ENCODE measurements at regions of chr10 and their contacts with region 1.

Region 1: DNA sequence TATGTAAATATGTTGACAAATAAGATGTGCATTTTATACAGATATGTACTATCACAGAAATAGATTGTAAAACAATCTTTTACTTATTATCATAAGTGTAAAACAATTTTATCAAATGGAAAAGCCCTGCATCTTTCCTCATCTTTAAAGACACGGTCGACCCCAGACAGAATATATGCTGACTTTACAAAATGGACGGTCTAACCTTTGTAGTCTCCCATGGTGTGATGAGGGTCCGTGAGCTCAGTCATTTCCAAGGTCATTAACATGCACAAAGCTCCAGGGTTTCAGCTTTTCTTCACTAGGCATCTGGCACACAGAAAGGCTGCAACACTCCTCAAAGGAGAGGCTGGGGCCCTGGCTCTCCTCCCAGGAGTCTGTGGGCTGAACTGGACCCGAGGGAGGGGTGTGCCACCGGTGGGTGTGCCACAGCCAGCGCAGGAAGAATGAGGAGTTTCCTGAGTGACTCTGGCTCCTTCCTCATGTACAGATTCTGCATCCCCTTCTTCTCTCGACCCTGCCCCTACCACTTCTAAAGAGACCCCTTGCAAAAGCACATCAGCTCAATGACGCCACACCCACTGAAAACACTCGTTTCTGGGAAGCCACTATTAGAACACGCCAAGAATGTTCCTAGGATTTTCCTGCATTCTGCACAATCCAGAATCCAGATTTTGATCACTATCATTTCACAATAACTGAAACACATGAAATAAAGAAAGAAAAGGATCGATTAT is 26.2 kb upstream of the ABLIM1 start:
- DNase-seq: peak; percentile 85
- H3K4me3 ChIP-seq: peak overlapping the region; percentile 3 to 68 (median 35)
- H3K27ac ChIP-seq: peak overlapping the region; percentile 92
- H3K4me1 ChIP-seq: peaks cover 45% of the 10 kb centered on the region
- H3K27me3 ChIP-seq: no peaks in the 10 kb centered on the region
- CTCF ChIP-seq: no peak
- POLR2A ChIP-seq: no peak

Region 2: DNA sequence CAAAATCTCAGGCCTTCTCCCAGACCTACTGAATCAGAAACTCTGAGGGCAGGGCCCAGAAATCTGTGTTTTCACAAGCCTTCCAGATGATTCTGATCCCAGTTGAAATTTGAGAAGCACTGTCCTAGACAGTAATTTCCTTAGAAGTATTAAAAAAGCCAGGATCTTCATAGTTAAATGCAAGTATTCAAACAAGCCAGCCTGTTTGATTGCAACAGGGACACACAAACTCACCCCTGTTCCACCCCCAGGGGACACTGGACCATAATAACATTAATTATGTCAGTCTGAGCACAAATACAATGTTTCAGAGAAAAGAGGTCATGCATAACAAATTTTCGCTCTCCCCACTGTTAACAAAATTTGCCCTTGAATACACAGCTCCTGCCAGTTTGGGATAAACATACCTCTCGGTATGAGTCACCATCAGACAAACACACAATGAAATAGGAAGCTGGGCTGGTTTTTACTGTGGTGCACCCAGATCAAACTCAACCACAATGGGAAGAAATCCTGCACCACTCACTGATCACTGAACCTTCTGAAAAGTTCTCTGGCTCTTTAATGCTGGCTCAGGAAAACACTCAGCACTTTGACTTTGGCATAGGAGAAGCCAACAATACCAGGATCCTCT is 60.5 kb before region 1 on chr10:
- CTCF ChIA-PET with region 1: no interaction called
- POLR2A ChIA-PET with region 1: no interaction called
- dilution Hi-C with region 1: no loop called
- intact Hi-C with region 1: loop called (anchors 1 kb)
- DNase-seq: peak; percentile 90
- H3K4me3 ChIP-seq: no peak overlapping the region
- H3K27ac ChIP-seq: peak overlapping the region; percentile 45
- H3K4me1 ChIP-seq: peaks cover 15% of the 10 kb centered on the region
- H3K27me3 ChIP-seq: no peaks in the 10 kb centered on the region
- CTCF ChIP-seq: no peak
- POLR2A ChIP-seq: no peak

Region 3: GRCh38 chr10:114631666-114632417 is 52.4 kb before region 1 on chr10:
- CTCF ChIA-PET with region 1: interaction called, 3 read pairs
- POLR2A ChIA-PET with region 1: interaction called, 3 read pairs
- dilution Hi-C with region 1: no loop called
- intact Hi-C with region 1: loop called (anchors 1 kb)
- DNase-seq: peak; percentile 60
- H3K4me3 ChIP-seq: peak overlapping the region; percentile 56 to 75 (median 71)
- H3K27ac ChIP-seq: no peak overlapping the region
- H3K4me1 ChIP-seq: peaks cover 39% of the 10 kb centered on the region
- H3K27me3 ChIP-seq: no peaks in the 10 kb centered on the region
- CTCF ChIP-seq: no peak
- POLR2A ChIP-seq: no peak

Region 4: DNA sequence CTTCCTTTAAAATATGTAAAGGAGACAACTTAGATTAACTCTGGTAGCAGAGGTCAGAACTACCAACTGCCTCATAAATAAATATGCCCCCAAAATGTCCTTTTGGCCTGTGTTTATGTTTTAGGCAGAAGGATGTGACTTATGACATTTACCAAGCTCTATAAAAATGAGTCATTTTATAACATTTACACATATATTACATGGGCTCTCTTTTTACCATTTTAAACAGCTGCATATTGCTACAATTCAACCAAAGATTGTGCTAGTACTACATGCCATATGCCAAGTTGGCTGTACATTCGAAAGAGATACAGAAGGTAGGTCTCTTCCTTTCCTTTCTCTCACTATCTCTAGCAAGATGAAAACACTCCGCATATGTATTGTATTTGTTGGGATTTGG is 38.5 kb before region 1 on chr10:
- CTCF ChIA-PET with region 1: interaction called, 4 read pairs
- POLR2A ChIA-PET with region 1: no interaction called
- dilution Hi-C with region 1: no loop called
- intact Hi-C with region 1: loop called (anchors 1 kb)
- DNase-seq: peak; percentile 71
- H3K4me3 ChIP-seq: no peak overlapping the region
- H3K27ac ChIP-seq: peak overlapping the region; percentile 21
- H3K4me1 ChIP-seq: peaks cover 55% of the 10 kb centered on the region
- H3K27me3 ChIP-seq: no peaks in the 10 kb centered on the region
- CTCF ChIP-seq: no peak
- POLR2A ChIP-seq: no peak

Region 5: DNA sequence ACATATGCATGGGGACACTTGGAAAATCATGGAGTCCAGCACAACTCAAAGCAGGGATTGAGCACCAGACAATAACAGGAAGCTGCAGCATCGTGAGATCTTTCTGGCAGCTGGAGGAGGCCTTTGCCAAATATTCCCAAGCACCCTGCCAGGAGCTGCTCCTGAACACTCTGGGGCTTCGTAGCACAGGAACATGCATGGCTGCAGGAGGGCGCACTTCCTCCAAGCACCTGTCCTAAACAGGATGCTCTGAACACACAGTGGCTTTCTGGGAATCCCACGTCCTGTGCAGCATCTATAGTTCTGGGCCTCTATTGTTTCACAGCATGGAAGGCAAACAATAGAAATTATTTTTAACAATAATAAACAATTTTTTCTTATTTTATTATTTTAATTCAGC is 30.3 kb before region 1 on chr10:
- CTCF ChIA-PET with region 1: interaction called, 4 read pairs
- POLR2A ChIA-PET with region 1: interaction called, 3 read pairs
- dilution Hi-C with region 1: no loop called
- intact Hi-C with region 1: loop called (anchors 1 kb)
- DNase-seq: peak; percentile 90
- H3K4me3 ChIP-seq: no peak overlapping the region
- H3K27ac ChIP-seq: peak overlapping the region; percentile 82
- H3K4me1 ChIP-seq: peaks cover 64% of the 10 kb centered on the region
- H3K27me3 ChIP-seq: no peaks in the 10 kb centered on the region
- CTCF ChIP-seq: no peak
- POLR2A ChIP-seq: no peak

Region 6: DNA sequence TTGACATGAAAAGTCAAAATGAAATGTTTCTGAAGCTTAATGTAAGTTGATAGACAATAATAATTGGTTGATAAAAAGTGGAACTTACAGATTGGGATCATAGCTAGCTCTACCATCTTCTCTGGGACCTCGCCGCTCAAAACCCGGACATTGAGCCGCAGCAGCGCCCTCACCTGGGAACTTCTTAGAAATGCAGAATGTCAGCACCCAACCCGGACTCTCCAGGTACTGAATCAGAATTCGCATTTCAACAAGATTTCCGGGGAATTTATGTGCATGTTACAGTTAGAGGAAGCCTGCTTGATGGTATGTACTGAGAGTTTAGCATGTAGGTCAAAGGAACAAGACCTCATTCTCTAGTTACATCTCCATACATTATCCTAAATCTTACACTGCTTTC is 10.5 kb after region 1 on chr10:
- CTCF ChIA-PET with region 1: interaction called, 54 read pairs
- POLR2A ChIA-PET with region 1: no interaction called
- dilution Hi-C with region 1: no loop called
- intact Hi-C with region 1: loop called (anchors 1 kb)
- DNase-seq: peak; percentile 62
- H3K4me3 ChIP-seq: no peak overlapping the region
- H3K27ac ChIP-seq: no peak overlapping the region
- H3K4me1 ChIP-seq: peaks cover 15% of the 10 kb centered on the region
- H3K27me3 ChIP-seq: no peaks in the 10 kb centered on the region
- CTCF ChIP-seq: peak; percentile 54 to 70
- POLR2A ChIP-seq: no peak

Region 7: DNA sequence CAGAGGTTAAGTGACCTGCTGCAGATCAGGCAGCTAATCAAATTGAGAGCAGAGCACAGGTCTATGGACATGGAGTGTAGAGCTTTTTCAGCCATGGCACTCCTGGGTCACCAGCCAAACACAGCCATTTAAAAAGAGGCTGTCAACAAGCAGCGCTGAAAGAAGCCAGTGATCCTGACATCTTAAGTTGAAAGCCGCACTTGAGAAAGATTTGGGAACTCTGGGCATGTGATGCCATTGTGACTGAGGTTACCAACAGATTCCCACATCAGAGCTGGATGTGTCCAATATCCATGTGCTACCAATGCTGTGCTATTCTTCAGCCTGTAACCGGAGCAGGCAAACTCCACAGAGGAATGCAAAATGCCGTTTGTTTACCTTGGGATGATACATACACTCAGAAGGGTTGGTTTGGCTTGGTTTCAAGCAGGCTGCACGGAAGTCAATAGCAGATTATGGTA is 30.1 kb after region 1 on chr10:
- CTCF ChIA-PET with region 1: interaction called, 6 read pairs
- POLR2A ChIA-PET with region 1: interaction called, 6 read pairs
- dilution Hi-C with region 1: no loop called
- intact Hi-C with region 1: loop called (anchors 1 kb)
- DNase-seq: peak; percentile 93
- H3K4me3 ChIP-seq: no peak overlapping the region
- H3K27ac ChIP-seq: peak overlapping the region; percentile 58
- H3K4me1 ChIP-seq: peaks cover 37% of the 10 kb centered on the region
- H3K27me3 ChIP-seq: no peaks in the 10 kb centered on the region
- CTCF ChIP-seq: no peak
- POLR2A ChIP-seq: no peak

Region 8: DNA sequence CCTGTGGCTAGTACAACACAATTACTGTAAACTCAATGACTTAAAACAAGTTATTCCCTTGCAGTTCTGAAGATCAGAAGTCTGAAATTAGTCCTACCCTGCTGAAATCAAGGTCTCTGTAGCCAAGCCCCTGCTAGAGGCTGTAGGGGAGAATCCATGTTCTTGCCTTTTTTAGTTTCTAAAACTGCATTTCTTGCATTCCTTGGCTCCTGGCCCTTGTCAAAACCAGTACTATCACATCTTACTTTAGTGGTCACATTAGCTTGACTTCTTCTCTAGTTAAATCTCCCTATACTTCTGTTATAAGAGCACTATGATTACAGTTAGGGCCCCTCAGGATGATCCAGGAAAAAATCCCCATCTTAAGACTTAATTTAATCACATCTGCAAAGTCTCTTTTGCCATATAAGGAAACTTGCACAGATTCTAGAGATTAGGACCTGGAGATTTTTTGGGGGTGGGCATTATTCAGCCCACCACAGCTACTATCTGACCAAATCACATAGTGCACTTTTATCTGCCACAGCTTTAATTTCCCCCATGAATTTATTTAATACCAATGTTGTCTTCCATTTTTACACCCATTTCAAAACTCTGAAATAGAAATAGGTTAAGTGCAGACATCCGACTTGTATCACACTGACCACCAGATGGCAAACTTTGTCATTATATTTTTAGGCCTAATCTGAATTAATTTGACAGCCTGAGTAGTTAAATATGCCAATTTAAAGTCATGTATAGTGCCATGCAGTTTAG is 1022.0 kb after region 1 on chr10:
- CTCF ChIA-PET with region 1: no interaction called
- POLR2A ChIA-PET with region 1: no interaction called
- dilution Hi-C with region 1: no loop called
- intact Hi-C with region 1: no loop called
- DNase-seq: peak; percentile 26
- H3K4me3 ChIP-seq: no peak overlapping the region
- H3K27ac ChIP-seq: no peak overlapping the region
- H3K4me1 ChIP-seq: no peaks in the 10 kb centered on the region
- H3K27me3 ChIP-seq: no peaks in the 10 kb centered on the region
- CTCF ChIP-seq: peak; percentile 12 to 20
- POLR2A ChIP-seq: no peak

Measured in endothelial cell of umbilical vein (primary cell).